ENCODE measurements at regions of chr9 and their contacts with region 1.

Region 1: GRCh38 chr9:128863647-128864046 is 18.1 kb downstream of the KYAT1 start:
- DNase-seq: peak; percentile 61 to 88 (median 75)
- ATAC-seq: peak; percentile 80 to 91 (median 86)
- H3K4me3 ChIP-seq: no peak overlapping the region
- H3K27ac ChIP-seq: peak overlapping the region in 1 of 12 donors; percentile 37
- H3K4me1 ChIP-seq: peaks cover 0 to 19% (median 3%) of the 10 kb centered on the region in 12 donors
- H3K27me3 ChIP-seq: no peaks in the 10 kb centered on the region
- CTCF ChIP-seq: peak; percentile 73 to 99 (median 96)
- POLR2A ChIP-seq: no peak

Region 2: GRCh38 chr9:128829477-128830251 is 34.0 kb before region 1 on chr9 and contains the start of gene SPOUT1:
- intact Hi-C with region 1: no loop called
- DNase-seq: peak; percentile 91 to 96 (median 95)
- ATAC-seq: peak; percentile 98 to 100 (median 99)
- H3K4me3 ChIP-seq: peak within 1 kb of the TSS; percentile 67 to 98 (median 88)
- H3K27ac ChIP-seq: peak within 1 kb of the TSS in 11 of 12 donors; percentile 11 to 89 (median 75)
- H3K4me1 ChIP-seq: peaks cover 0 to 17% (median 12%) of the 10 kb centered on the region in 12 donors
- H3K27me3 ChIP-seq: no peaks in the 10 kb centered on the region
- CTCF ChIP-seq: no peak
- POLR2A ChIP-seq: peak in 1 of 2 donors; percentile 62
- total RNA-seq, gene SPOUT1: 6.1 to 24.7 (median 15.1) TPM

Region 3: GRCh38 chr9:128881901-128882681 is 18.4 kb after region 1 on chr9 and contains the starts of genes KYAT1 and LRRC8A:
- intact Hi-C with region 1: loop called in 1 of 10 experiments (anchors 1 kb)
- DNase-seq: peak; percentile 98 to 99 (median 98)
- ATAC-seq: peak; percentile 87 to 94 (median 90)
- H3K4me3 ChIP-seq: peak within 1 kb of the TSS; percentile 80 to 100 (median 98)
- H3K27ac ChIP-seq: peak within 1 kb of the TSS; percentile 93 to 100 (median 99)
- H3K4me1 ChIP-seq: peaks cover 8 to 82% (median 49%) of the 10 kb centered on the region in 12 donors
- H3K27me3 ChIP-seq: no peaks in the 10 kb centered on the region
- CTCF ChIP-seq: peak in 2 of 12 donors; percentile 14 to 29
- POLR2A ChIP-seq: peak in 1 of 2 donors; percentile 88
- total RNA-seq, gene KYAT1: 9.5 to 16.7 (median 13.4) TPM
- total RNA-seq, gene LRRC8A: 16.2 to 76.4 (median 28.8) TPM

Region 4: DNA sequence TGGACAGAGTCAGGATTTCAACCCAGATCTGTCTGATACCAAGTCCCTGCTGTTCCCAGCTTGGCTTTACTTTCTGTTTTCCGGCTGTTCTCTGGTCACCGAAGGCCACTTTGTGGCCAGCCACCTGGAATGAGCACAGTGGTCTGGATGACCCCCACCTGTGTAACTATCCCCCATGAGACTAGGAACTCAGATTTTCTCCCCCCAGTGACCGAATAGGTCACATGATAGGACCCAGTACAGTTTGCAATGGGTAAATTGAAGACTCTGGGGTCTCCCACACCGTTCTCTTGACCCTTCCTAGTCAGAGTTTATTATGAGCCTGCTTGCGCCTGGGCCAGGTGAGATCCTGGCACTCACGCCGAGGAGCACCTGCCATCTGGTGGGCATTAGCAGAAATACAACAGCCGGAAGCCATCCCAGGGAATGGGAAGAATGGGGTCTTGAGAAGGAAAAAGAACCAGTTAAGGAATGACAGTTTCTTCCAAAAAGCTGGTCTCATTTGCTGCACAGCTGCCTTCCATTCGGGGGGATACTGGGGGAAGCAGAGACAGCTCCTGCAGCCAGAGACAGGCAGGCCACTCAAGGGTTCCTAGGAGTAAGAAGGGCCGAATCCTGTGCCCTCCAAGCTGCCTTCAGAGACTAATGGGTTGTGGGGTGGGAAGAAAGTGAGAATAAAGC is 64.2 kb after region 1 on chr9:
- intact Hi-C with region 1: loop called (anchors 1 to 2 kb)
- DNase-seq: peak in 1 of 5 donors; percentile 60
- ATAC-seq: peak in 3 of 4 donors; percentile 72 to 82 (median 75)
- H3K4me3 ChIP-seq: no peak overlapping the region
- H3K27ac ChIP-seq: no peak overlapping the region
- H3K4me1 ChIP-seq: peaks cover 0 to 14% (median 1%) of the 10 kb centered on the region in 12 donors
- H3K27me3 ChIP-seq: no peaks in the 10 kb centered on the region
- CTCF ChIP-seq: peak; percentile 81 to 93 (median 86)
- POLR2A ChIP-seq: no peak

Region 5: DNA sequence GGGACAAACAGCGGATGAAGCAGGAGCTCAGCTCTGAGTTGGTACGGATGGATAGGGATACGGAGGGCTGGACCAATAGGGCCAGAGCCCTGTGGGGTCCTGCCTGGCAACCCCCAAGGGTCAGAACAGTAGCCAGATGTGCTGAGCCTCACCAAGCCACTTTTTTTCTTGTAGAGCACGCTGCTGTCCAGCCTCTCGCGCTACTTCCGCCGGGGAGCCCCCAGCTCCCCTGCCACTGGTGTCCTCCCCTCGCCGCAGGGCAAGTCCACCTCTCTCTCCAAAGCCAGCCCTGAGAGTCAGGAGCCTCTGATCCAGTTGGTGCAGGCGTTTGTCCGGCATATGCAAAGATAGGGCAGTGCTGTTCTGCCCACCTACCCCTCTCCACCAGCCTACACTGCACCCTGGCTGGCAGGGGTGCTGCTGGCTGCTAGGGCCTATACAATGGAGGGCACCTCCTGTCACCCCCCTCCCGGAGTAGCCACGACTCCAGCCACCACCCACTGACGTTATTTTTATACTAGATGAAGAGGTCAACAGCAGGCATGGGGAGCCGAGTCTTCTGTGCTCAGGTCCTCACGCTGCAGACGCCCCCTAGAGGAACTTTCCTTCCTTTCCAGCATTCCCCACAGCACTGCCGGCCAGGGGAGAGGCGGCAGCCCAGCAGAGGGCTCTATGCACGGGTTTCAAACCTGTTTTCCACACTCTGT is 142.8 kb after region 1 on chr9:
- intact Hi-C with region 1: loop called in 3 of 10 experiments (anchors 10 kb)
- DNase-seq: peak; percentile 66 to 79 (median 70)
- ATAC-seq: peak; percentile 81 to 90 (median 86)
- H3K4me3 ChIP-seq: no peak overlapping the region
- H3K27ac ChIP-seq: peak overlapping the region in 10 of 12 donors; percentile 28 to 72 (median 48)
- H3K4me1 ChIP-seq: peaks cover 0 to 22% (median 12%) of the 10 kb centered on the region in 12 donors
- H3K27me3 ChIP-seq: no peaks in the 10 kb centered on the region
- CTCF ChIP-seq: peak; percentile 72 to 97 (median 81)
- POLR2A ChIP-seq: no peak

Region 6: DNA sequence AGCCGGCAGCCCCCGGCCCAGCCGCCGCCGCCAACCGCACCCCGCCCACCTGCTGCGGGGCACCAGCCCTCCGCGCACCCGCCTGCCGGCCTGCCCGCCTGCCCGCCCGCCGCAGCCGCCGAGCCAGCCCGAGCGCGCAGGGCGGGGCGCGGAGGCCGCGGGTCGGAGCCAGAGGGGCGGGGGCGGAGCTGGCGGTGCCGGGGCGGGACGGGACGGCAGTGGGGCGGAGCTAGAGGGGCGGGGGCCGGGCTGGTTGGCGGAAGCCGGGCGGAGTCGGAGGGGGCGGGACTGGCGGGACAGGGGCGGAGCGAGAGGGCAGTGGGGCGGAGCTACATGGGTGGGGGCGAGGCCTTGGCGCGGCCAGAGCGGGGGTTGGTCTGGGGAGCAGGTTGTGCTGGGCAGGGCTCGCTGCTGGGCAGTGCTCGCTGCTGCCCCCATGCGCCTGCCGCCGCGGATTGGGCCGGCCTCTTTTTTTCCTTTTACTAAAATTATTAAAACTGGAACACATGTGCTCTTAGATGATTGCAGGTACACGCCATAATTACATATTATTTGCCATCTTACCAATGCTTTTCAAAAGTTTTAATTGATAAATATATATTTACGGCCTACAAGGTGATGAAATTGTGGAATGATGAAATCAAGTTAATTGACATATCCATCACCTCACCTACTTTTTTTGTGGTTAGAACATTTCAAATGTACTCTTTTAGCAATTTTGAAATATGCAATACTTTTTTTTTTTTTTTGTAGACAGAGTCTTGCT is 164.7 kb after region 1 on chr9 and contains the start of gene SH3GLB2:
- intact Hi-C with region 1: loop called in 1 of 10 experiments (anchors 5 kb)
- DNase-seq: peak; percentile 95 to 99 (median 96)
- ATAC-seq: peak; percentile 97 to 99 (median 98)
- H3K4me3 ChIP-seq: peak within 1 kb of the TSS; percentile 65 to 96 (median 80)
- H3K27ac ChIP-seq: peak within 1 kb of the TSS in 11 of 12 donors; percentile 12 to 81 (median 63)
- H3K4me1 ChIP-seq: peaks cover 0 to 35% (median 18%) of the 10 kb centered on the region in 12 donors
- H3K27me3 ChIP-seq: no peaks in the 10 kb centered on the region
- CTCF ChIP-seq: peak; percentile 84 to 97 (median 92)
- POLR2A ChIP-seq: no peak
- total RNA-seq, gene SH3GLB2: 27.3 to 42.7 (median 36.5) TPM

Measured in heart left ventricle (tissue), 16 donors.